Activated CD4-positive, alpha-beta memory T cell treated with anti-CD3 and anti-CD28 coated beads for 36 hours (primary cell): ENCODE measurements at regions of chr7 and their contacts with region 1.

Region 1: DNA sequence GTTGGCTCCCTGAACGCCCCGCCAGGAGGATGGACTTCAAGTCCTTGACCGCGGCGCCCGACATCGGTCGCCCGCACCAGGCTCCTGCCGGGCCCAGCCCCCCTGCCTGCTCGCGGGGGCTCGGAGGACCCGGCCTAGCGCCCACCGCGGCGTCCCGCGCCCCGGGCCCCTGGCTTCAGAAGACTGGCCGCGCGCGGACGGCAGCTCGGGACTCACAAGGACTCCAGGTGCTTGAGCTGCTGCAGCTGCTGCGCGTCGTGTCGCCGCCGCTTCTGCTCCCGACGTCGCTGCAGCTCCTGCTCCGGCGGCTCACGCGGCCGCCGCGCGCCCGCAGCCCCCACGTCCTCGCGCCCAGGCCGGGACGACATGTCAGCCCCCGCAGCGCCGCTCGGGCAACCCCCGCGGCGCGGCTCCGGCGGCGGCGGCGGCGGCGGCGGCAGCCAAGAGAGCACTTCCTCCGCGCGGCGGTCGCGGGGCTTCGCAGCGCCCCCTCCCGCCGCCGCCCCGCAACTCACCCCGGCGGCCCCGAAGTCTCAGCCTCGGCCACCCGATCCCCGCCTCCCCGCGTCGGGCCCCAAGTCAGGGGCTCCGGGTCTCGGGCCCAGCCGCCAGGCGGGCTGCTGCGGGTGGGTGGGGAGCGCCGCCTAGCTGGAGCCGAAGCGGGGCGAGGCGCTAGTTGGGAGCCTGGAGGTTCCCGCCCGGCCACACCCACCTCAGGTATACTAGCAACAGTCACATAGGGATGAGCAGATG is at the start of gene RP9:
- DNase-seq: peak; percentile 83
- H3K4me3 Mint-ChIP-seq: peak within 1 kb of the TSS; percentile 90
- H3K27ac Mint-ChIP-seq: peak within 1 kb of the TSS; percentile 40
- H3K4me1 Mint-ChIP-seq: peaks cover 36% of the 10 kb centered on the region
- H3K27me3 Mint-ChIP-seq: peaks cover 2% of the 10 kb centered on the region
- total RNA-seq, gene RP9: 11.6 to 14.0 TPM

Region 2: DNA sequence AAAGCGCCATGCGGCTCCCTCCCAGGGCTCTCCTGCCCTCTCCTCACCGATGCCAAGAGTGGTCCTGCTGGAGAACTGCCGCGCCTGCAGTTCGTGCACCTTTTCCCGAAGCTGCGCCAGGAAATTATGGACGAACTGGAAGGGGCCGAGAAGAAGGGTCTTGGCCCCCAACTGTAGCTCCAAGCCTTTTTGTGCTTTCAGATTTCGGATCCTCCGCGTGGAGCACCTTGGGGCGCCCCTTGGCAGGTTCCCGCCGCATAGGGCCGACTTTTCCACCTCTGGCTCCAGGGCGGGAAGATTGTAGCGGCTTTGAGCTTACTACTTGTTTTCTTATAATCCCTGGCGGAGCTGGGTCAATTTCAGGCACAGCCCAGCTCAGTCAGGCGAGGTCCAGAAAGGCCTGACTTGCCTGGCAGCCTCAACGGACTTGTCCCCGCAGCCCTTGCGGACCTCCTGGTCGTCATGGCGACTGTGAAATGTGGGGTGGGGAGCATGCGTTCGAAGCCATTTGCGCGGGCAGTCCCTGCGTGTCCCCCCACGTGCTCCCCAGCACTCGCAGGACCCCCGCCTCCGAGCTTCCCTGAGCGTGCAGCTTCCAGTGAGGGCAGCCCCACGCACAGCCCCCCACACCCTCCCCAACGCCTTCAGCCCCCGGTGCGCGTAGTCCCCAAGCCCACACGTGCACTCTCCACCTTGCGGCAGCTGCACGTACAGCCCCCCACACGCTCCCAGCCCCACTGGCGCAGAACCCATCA is 347.6 kb before region 1 on chr7:
- CTCF ChIA-PET with region 1: interaction called, 5 read pairs
- POLR2A ChIA-PET with region 1: no interaction called
- intact Hi-C with region 1: loop called (anchors 1 kb)
- DNase-seq: no peak
- H3K4me3 Mint-ChIP-seq: no peak overlapping the region
- H3K27ac Mint-ChIP-seq: no peak overlapping the region
- H3K4me1 Mint-ChIP-seq: peaks cover 8% of the 10 kb centered on the region
- H3K27me3 Mint-ChIP-seq: peaks cover 38% of the 10 kb centered on the region

Region 3: DNA sequence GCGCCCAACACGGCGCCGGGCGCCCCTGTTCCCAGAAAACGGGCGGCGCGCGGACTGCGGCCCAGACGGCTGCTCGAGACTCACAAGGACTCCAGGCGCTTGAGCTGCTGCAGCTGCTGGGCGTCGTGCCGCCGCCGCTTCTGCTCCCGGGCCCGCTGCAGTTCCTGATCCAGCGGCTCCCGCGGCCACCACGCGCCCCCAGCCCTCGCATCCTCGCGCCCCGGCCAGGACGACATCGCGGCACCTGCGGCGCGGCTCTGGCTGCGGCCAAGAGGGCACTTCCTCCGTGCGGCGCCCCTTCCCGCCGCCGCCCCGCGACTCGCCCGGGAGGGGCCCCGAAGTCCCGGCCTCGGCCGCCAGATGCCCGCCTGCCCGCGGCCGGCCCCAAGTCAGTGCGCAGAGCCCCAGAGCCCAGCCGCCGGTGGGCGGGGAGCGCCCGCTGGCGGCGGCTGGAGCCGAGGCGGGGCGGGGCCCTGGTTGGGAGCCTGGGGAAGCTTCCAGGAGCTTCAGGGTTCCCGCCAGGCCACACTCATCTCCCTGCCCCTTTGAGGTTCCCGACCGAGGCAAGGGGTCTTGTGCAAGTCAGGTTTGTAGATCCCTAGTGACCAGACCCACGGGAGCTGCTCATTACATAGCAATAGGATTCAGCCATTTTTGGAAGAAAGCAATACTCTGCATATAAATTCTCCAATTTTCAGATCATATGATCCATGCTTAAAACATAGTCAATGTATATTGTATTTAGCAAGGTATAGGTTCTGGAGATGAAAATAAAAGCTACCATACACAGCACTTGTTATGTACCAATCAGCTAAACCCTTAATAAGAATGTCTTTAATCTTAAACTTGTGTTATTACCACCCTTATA is 166.2 kb before region 1 on chr7:
- CTCF ChIA-PET with region 1: interaction called, 15 read pairs
- POLR2A ChIA-PET with region 1: no interaction called
- intact Hi-C with region 1: loop called (anchors 2 kb)
- DNase-seq: peak; percentile 82
- H3K4me3 Mint-ChIP-seq: peak overlapping the region; percentile 72
- H3K27ac Mint-ChIP-seq: no peak overlapping the region
- H3K4me1 Mint-ChIP-seq: peaks cover 10% of the 10 kb centered on the region
- H3K27me3 Mint-ChIP-seq: peaks cover 3% of the 10 kb centered on the region

Region 4: DNA sequence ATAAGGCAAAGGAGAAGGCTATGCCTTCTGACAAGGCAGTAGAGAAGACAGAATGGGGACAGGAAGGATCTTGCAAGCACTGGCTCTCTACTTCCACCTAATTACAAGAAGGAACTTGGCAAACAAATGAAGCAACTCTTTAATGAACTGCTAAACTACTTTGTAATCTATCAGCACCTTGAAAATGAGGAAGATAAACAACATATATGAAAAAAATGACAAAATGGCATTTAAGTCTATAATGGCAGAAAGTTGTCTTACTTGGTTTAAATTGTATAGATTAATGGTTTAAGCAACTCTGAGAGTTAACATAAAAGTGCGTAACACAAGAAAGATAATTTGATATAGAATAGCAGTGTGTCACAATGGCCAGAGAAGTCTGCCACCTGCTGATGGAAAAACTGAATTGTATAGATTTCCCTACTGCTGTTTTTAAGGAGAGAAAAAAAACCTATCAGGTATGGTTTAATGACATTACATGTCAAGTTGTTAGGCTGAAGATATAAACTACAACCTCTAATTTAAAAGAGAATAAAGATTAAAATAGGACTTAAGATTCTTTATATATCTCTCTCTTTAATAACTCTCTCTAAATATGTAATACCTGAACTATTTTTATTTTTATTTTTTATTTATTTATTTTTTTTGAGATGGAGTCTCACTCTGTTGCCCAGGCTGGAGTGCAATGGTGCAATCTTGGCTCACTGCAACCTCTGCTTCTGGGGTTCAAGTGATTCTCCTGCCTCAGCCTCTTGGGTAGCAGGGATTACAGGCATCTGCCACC is 58.5 kb before region 1 on chr7:
- CTCF ChIA-PET with region 1: interaction called, 10 read pairs
- POLR2A ChIA-PET with region 1: no interaction called
- intact Hi-C with region 1: no loop called
- DNase-seq: no peak
- H3K4me3 Mint-ChIP-seq: no peak overlapping the region
- H3K27ac Mint-ChIP-seq: no peak overlapping the region
- H3K4me1 Mint-ChIP-seq: peaks cover 44% of the 10 kb centered on the region
- H3K27me3 Mint-ChIP-seq: no peaks in the 10 kb centered on the region

Region 5: GRCh38 chr7:33128990-33129805 is 20.0 kb after region 1 on chr7 and contains the start of gene BBS9:
- CTCF ChIA-PET with region 1: interaction called, 24 read pairs
- POLR2A ChIA-PET with region 1: interaction called, 3 read pairs
- intact Hi-C with region 1: loop called (anchors 1 kb)
- DNase-seq: peak; percentile 95
- H3K4me3 Mint-ChIP-seq: peak within 1 kb of the TSS; percentile 96
- H3K27ac Mint-ChIP-seq: peak within 1 kb of the TSS; percentile 78
- H3K4me1 Mint-ChIP-seq: peaks cover 18% of the 10 kb centered on the region
- H3K27me3 Mint-ChIP-seq: no peaks in the 10 kb centered on the region
- total RNA-seq, gene BBS9: 9.2 to 9.5 TPM